ENCODE measurements at regions of chr1 and their contacts with region 1.

Region 1: GRCh38 chr1:112882271-112882744 is 73.7 kb downstream of the SLC16A1 start:
- DNase-seq: no peak
- H3K4me3 ChIP-seq: no peak overlapping the region
- H3K27ac ChIP-seq: no peak overlapping the region
- H3K4me1 ChIP-seq: peaks cover 1% of the 10 kb centered on the region
- H3K27me3 ChIP-seq: no peaks in the 10 kb centered on the region
- CTCF ChIP-seq: no peak

Region 2: GRCh38 chr1:112809253-112809684 is 73.0 kb before region 1 on chr1:
- CTCF ChIA-PET with region 1: no interaction called
- POLR2A ChIA-PET with region 1: no interaction called
- intact Hi-C with region 1: loop called (anchors 2 kb)
- DNase-seq: peak; percentile 49 to 79
- H3K4me3 ChIP-seq: no peak overlapping the region
- H3K27ac ChIP-seq: no peak overlapping the region
- H3K4me1 ChIP-seq: peaks cover 21% of the 10 kb centered on the region
- H3K27me3 ChIP-seq: no peaks in the 10 kb centered on the region
- CTCF ChIP-seq: peak; percentile 98

Region 3: GRCh38 chr1:112911506-112911905 is 29.2 kb after region 1 on chr1:
- CTCF ChIA-PET with region 1: interaction called, 20 read pairs
- POLR2A ChIA-PET with region 1: no interaction called
- intact Hi-C with region 1: no loop called
- DNase-seq: no peak
- H3K4me3 ChIP-seq: no peak overlapping the region
- H3K27ac ChIP-seq: no peak overlapping the region
- H3K4me1 ChIP-seq: peaks cover 16% of the 10 kb centered on the region
- H3K27me3 ChIP-seq: no peaks in the 10 kb centered on the region
- CTCF ChIP-seq: no peak

Region 4: GRCh38 chr1:112935461-112936289 is 53.4 kb after region 1 on chr1:
- CTCF ChIA-PET with region 1: no interaction called
- POLR2A ChIA-PET with region 1: interaction called, 19 read pairs
- intact Hi-C with region 1: no loop called
- DNase-seq: peak in 1 of 2 experiments; percentile 56
- H3K4me3 ChIP-seq: peak overlapping the region; percentile 20; the same call in 1 of the 2 replicates
- H3K27ac ChIP-seq: peak overlapping the region; percentile 93
- H3K4me1 ChIP-seq: peaks cover 39% of the 10 kb centered on the region
- H3K27me3 ChIP-seq: no peaks in the 10 kb centered on the region
- CTCF ChIP-seq: no peak

Region 5: GRCh38 chr1:112955781-112956543 is 73.7 kb after region 1 on chr1 and contains the start of gene SLC16A1:
- CTCF ChIA-PET with region 1: no interaction called
- POLR2A ChIA-PET with region 1: interaction called, 6 read pairs
- intact Hi-C with region 1: loop called (anchors 1 kb)
- DNase-seq: peak; percentile 81 to 92
- H3K4me3 ChIP-seq: peak within 1 kb of the TSS; percentile 82
- H3K27ac ChIP-seq: peak within 1 kb of the TSS; percentile 73
- H3K4me1 ChIP-seq: peaks cover 36% of the 10 kb centered on the region
- H3K27me3 ChIP-seq: no peaks in the 10 kb centered on the region
- CTCF ChIP-seq: peak; percentile 31
- total RNA-seq, gene SLC16A1: 52.9 and 74.6 TPM in 2 replicates

Region 6: DNA sequence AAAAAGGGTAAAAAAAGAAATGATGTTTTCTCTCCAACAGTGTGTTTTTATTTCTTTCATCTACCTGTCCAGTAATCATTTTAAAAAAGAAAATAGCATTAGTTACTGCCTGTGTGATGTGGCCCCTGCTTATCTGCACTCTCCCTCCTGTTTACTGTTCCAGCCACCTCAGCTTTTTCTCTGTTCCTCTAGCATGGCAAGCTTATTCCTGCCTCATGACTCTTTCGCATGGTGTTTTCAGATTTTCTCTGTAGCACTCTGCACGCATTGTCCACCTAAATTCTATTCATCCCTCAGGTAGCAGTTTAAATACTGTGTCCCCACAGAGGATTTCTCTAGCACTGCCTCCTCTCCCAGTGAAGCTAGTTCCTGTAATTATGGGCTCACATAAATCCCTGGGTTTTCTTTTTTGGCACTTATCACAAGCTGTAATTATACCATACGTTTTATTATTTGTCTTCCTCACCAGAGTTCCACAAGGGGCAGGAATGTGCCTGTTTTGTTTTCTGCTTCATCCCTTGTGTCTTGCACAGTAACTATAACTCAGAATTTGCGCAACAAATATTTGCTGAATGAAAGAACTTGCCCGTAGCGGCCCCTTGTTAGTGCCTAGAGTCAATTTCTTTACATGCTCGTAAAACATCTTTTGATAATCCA is 139.2 kb after region 1 on chr1:
- CTCF ChIA-PET with region 1: interaction called, 13 read pairs
- POLR2A ChIA-PET with region 1: no interaction called
- intact Hi-C with region 1: no loop called
- DNase-seq: peak in 1 of 2 experiments; percentile 83
- H3K4me3 ChIP-seq: no peak overlapping the region
- H3K27ac ChIP-seq: 0 out of 2 replicates have a peak overlapping the region, but pooled peaks have one; percentile 6
- H3K4me1 ChIP-seq: peaks cover 13% of the 10 kb centered on the region; the same call in 1 of the 2 replicates
- H3K27me3 ChIP-seq: no peaks in the 10 kb centered on the region
- CTCF ChIP-seq: peak; percentile 24; the same call in 1 of the 2 replicates

Region 7: DNA sequence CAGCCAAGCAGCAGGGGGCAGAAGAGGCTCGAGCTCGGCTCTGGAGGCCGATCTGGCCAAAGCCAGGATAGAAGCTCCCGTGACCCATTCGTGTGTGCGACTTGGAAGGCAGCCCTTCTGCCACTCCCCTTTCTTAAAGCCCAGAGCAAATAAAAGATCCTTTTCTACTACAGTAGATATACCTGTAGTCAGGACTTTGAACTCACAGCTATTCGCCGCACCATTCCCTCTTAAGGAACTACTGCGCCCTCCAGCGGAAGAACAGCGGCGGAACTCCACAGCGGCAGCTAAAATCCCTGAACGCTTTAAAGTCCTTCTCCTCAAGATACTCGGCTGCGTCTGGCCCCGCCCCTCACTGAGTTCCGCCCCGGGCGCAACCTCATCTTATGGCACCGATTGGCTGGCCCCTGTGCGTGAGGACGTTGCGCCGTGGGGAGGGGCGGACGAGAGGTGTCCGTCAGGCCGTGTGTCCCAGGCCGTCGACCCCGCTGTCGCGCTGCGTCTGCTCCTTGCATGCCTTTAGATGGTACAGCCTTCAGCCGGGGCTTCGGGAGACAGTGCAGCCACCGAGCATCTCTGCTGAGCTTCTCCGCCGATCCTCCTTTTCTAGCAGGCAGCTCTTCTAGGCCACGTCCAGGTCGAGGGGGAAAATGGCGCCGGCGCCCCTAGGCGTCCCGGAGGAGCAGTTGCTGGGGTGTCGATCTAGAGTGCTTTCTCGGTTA is 190.6 kb after region 1 on chr1 and contains the start of gene LRIG2:
- CTCF ChIA-PET with region 1: interaction called, 10 read pairs
- POLR2A ChIA-PET with region 1: no interaction called
- intact Hi-C with region 1: loop called (anchors 2 kb)
- DNase-seq: peak; percentile 99
- H3K4me3 ChIP-seq: peak within 1 kb of the TSS; percentile 85
- H3K27ac ChIP-seq: peak within 1 kb of the TSS; percentile 78
- H3K4me1 ChIP-seq: peaks cover 20% of the 10 kb centered on the region
- H3K27me3 ChIP-seq: no peaks in the 10 kb centered on the region
- CTCF ChIP-seq: peak; percentile 94
- total RNA-seq, gene LRIG2: 9.4 and 10.6 TPM in 2 replicates